A549 (cell line): ENCODE measurements at regions of chr19 and their contacts with region 1.

Region 1: DNA sequence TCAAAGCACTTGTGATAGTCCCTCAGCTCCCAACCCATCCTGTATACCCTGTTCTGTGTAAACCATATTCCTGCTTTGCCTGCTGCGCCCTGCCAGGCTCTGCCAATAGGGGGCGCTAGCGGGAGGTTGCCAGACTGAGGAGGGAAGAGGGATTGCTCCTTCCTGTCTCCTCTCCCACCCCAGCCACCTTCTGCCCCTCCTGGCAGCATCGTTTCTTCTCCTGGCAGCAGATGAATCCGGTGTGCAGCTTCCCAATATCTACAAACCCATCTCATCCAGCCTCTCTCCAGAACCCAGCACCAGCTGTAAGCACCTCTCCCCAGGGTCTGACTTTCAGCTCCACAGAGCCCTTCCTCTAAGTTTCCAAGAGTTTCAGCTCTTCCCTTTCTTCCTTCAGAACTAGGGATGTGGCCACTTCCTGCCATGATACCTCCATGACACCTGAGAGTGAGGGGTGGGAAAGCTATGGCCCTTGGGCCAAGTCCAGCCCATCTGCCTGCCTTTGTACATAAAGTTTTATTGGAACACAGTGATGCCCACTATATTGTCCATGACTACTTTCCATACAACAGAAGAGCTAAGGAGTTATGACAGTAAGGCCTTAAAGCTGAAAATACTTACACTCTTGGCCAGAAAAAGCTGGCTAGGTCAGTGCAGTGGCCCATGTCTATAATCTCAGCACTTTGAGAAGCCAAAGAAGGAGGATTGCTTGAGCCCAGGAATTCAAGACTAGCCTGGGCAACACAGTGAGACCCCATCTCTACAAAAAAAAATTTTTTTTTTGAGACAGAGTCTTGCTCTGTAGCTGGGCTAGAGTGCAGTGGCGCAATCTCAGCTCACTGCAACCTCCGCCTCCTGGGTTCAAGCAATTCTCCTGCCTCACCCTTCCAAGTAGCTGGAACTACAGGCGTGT is 34.5 kb upstream of the ATP1A3 start:
- DNase-seq: peak in 1 of 2 experiments; percentile 56
- ATAC-seq: peak; percentile 37 to 62; a peak in 5 of 6 replicates
- H3K4me3 ChIP-seq: no peak overlapping the region
- H3K27ac ChIP-seq: no peak overlapping the region
- H3K4me1 ChIP-seq: no peaks in the 10 kb centered on the region
- CTCF ChIP-seq: peak; percentile 48
- EP300 ChIP-seq: no peak
- POLR2A ChIP-seq: no peak
- RAD21 ChIP-seq: no peak

Region 2: DNA sequence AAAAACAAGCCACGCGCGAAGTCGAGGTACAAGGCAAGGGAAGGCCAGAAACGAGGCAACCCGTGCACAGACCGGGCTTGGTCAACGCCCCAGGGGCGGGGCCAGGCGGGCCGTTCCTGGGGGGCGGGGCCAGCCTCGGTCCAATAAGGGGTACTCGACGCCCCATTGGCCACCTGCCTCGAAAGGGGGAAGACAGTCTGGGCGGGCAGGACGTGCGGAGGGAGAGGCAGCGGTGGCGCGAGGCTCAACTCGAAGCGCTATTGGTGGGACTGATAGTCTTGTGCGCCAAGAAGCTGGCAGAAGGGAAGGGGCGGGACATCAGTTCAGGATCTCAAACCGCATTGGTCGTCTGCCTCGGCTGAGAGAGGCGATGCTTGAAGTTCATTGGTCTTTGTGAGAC is 184.0 kb before region 1 on chr19 and contains the start of gene LYPD4:
- CTCF ChIA-PET with region 1: no interaction called
- POLR2A ChIA-PET with region 1: no interaction called
- DNase-seq: peak in 1 of 2 experiments; percentile 58
- ATAC-seq: peak; percentile 20 to 68; a peak in 4 of 6 replicates
- H3K4me3 ChIP-seq: no peak within 1 kb of the TSS
- H3K27ac ChIP-seq: no peak within 1 kb of the TSS
- H3K4me1 ChIP-seq: no peaks in the 10 kb centered on the region
- CTCF ChIP-seq: no peak
- EP300 ChIP-seq: no peak
- POLR2A ChIP-seq: no peak
- RAD21 ChIP-seq: no peak
- polyA plus RNA-seq, gene LYPD4: not detected in 2 replicates

Region 3: DNA sequence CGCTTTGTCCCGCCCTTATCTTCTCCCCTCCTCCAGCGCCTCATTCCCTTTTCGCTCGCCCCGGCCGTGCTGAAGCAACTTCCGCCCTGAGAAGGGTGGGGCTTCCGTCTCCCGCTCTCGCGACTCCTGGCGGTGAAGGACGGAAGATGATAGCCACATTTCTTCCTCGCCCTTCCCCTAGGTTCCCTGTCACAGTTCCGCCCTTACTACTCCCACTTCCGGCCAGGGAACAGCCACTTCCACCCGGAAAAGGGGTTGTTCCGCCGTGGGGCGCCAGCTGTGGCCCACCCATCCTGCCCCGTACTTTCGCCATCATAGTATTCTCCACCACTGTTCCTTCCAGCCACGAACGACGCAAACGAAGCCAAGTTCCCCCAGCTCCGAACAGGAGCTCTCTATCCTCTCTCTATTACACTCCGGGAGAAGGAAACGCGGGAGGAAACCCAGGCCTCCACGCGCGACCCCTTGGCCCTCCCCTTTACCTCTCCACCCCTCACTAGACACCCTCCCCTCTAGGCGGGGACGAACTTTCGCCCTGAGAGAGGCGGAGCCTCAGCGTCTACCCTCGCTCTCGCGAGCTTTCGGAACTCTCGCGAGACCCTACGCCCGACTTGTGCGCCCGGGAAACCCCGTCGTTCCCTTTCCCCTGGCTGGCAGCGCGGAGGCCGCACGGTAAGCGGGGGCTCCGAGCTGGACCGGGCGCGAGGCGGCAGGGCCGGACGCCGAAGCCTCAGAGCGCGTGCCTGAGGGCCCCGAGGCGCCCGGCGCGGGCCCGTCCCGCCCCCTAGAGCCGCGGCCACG is 168.7 kb before region 1 on chr19 and contains the start of gene RPS19:
- CTCF ChIA-PET with region 1: no interaction called
- POLR2A ChIA-PET with region 1: no interaction called
- DNase-seq: peak; percentile 100
- ATAC-seq: peak; percentile 86 to 92
- H3K4me3 ChIP-seq: peak within 1 kb of the TSS; percentile 89
- H3K27ac ChIP-seq: peak within 1 kb of the TSS; percentile 90 to 95
- H3K4me1 ChIP-seq: peaks cover 40% of the 10 kb centered on the region
- CTCF ChIP-seq: peak; percentile 56
- EP300 ChIP-seq: peak in 1 of 2 experiments; percentile 13; a peak in 1 of 5 replicates
- POLR2A ChIP-seq: peak; percentile 95
- RAD21 ChIP-seq: no peak; a peak in 1 of 5 replicates
- polyA plus RNA-seq, gene RPS19: 2,749 and 3,564 TPM in 2 replicates

Region 4: DNA sequence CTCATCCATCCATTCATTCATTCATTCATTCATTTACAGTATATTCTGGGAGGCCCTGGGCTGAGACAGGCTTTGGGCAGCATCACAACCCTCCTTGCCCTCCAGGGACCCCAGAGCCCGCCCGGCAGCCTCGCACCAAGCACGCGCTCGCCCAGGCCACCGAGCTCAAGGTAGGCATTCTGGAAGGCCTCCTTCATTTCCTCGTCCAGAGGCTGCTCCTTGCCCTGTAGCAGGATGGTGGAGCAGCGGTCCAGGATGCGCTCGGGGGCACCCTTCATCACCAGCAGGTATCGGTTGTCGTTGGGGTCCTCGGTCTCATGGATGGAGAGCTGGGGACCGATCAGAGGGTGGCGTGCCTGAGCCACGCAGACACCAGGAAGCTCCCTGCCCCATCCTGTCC is 50.1 kb before region 1 on chr19:
- CTCF ChIA-PET with region 1: interaction called, 10 read pairs
- POLR2A ChIA-PET with region 1: no interaction called
- DNase-seq: no peak
- ATAC-seq: no peak
- H3K4me3 ChIP-seq: no peak overlapping the region
- H3K27ac ChIP-seq: no peak overlapping the region
- H3K4me1 ChIP-seq: no peaks in the 10 kb centered on the region
- CTCF ChIP-seq: no peak
- EP300 ChIP-seq: no peak
- POLR2A ChIP-seq: no peak
- RAD21 ChIP-seq: no peak

Region 5: GRCh38 chr19:41984961-41985360 is 43.6 kb before region 1 on chr19:
- CTCF ChIA-PET with region 1: interaction called, 21 read pairs
- POLR2A ChIA-PET with region 1: no interaction called
- DNase-seq: no peak
- ATAC-seq: no peak; a peak in 1 of 6 replicates
- H3K4me3 ChIP-seq: no peak overlapping the region
- H3K27ac ChIP-seq: no peak overlapping the region
- H3K4me1 ChIP-seq: no peaks in the 10 kb centered on the region
- CTCF ChIP-seq: no peak
- EP300 ChIP-seq: no peak
- POLR2A ChIP-seq: no peak
- RAD21 ChIP-seq: no peak

Region 6: DNA sequence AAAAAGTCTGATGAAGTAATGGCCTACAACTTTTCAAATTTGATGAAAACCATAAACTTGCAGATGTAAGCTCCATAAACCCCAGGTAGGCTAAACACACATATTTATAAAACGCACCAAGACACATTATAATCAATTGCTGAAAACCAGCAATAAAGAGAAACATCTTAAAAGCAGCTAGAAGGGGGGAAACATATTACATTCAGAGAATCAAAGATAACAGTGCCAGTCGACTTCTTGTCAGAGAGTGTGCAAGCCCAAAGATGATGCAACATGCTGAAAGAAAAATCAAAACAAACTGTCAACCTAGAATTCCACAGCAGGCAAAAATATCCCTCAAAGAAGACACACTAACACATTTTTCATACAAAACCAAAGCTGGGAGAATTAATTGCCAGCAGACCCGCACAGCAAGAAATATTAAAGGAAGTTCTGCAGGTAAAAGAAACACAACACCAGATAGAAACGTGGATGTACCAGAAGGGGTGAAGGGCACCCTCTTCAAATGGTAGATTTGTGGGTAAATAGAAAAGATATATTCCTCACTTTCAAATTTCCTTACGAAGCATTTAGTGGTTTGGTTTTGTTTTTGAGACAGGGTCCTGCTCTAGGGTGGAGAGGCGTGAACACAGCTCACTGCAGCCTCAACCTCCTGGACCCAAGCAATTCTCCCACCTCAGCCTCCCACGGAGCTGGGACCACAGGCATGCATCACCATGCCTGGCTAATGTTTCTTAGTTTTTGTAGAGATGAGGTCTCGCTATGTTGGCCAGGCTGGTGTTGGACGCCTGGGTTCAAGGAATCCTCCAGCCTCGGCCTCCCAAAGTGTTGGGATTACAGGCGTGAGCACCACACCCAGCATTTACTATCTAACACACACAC is 18.1 kb before region 1 on chr19:
- CTCF ChIA-PET with region 1: interaction called, 230 read pairs
- POLR2A ChIA-PET with region 1: no interaction called
- DNase-seq: no peak
- ATAC-seq: no peak
- H3K4me3 ChIP-seq: no peak overlapping the region
- H3K27ac ChIP-seq: peak overlapping the region; percentile 66 to 77
- H3K4me1 ChIP-seq: peaks cover 12% of the 10 kb centered on the region
- CTCF ChIP-seq: no peak
- EP300 ChIP-seq: no peak
- POLR2A ChIP-seq: no peak
- RAD21 ChIP-seq: no peak

Region 7: GRCh38 chr19:42038666-42039065 is 10.1 kb after region 1 on chr19:
- CTCF ChIA-PET with region 1: interaction called, 324 read pairs
- POLR2A ChIA-PET with region 1: interaction called, 4 read pairs
- DNase-seq: no peak
- ATAC-seq: no peak
- H3K4me3 ChIP-seq: no peak overlapping the region
- H3K27ac ChIP-seq: no peak overlapping the region
- H3K4me1 ChIP-seq: peaks cover 5% of the 10 kb centered on the region; the same call in 1 of the 3 replicates
- CTCF ChIP-seq: no peak
- EP300 ChIP-seq: no peak
- POLR2A ChIP-seq: no peak
- RAD21 ChIP-seq: no peak

Region 8: DNA sequence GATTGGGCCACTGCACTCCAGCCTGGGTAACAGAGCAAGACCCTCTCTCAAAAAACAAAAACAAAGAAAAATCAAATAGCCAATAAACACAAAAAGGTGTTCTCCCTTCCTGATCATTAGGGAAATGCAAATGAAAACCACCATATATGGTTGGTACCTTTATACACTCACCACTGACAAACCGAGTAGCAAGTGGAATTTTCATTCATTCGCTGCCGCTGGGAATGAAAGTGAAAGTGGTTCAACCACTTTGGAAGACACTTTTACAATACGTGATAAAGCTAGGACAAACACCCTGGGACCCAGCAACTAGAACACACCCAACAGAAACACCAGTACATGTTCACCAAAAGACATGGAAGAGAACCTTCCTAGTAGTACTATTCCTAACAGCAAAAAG is 20.4 kb after region 1 on chr19:
- CTCF ChIA-PET with region 1: interaction called, 324 read pairs
- POLR2A ChIA-PET with region 1: no interaction called
- DNase-seq: no peak
- ATAC-seq: no peak; a peak in 1 of 6 replicates
- H3K4me3 ChIP-seq: peak overlapping the region; percentile 21
- H3K27ac ChIP-seq: 0 out of 6 replicates have a peak overlapping the region, but pooled peaks of 1 of the 2 experiments have one; percentile 18
- H3K4me1 ChIP-seq: peaks cover 14% of the 10 kb centered on the region; the same call in 1 of the 3 replicates
- CTCF ChIP-seq: no peak
- EP300 ChIP-seq: no peak
- POLR2A ChIP-seq: no peak
- RAD21 ChIP-seq: no peak